ENCODE measurements at regions of chr7 and their contacts with region 1.

Region 1: GRCh38 chr7:137579913-137580640 is 236.5 kb upstream of the PTN start:
- DNase-seq: no peak
- ATAC-seq: peak; percentile 72
- H3K4me3 ChIP-seq: no peak overlapping the region
- H3K27ac ChIP-seq: no peak overlapping the region
- H3K4me1 ChIP-seq: no peaks in the 10 kb centered on the region
- H3K27me3 ChIP-seq: no peaks in the 10 kb centered on the region
- CTCF ChIP-seq: no peak
- EP300 ChIP-seq: no peak
- POLR2A ChIP-seq: no peak
- RAD21 ChIP-seq: no peak

Region 2: DNA sequence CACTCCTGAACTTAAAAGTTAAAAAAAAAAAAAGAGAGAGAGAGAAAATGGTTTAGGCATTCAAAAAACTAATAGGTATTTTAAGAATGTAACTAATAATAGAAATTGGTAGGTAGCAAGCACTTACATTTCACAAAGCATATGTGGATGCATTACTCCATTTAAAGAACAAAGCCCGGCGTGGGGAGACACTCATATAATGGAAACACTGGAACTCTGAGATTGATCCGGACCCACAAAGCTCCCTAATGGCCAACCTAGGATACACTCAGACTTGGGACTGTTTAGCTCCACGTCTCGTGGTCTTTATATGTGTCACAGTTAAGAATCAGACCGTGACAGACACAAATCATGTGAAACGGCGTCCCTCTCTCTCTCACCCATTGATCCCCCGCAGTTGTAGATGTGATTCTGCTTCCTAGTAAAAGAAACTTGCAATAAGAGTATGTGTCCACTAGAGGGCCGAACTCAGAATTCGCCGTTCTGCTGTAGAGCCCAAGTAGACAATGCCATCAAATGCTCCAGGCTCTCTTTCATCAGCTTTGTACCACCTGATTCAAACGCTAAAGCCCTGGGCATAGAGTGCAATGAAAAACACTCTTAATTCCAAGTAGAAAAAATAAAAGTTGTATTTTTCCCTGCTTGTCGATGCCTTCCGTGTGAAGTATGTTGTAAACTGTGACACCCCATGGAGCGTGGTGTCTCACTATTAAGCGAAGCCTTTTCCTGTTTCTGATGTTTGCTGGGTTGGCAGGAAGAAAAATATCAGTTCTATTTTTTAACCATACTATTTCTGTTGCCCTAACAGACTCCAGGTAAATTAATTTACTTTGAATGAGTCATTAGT is 1173.9 kb before region 1 on chr7:
- CTCF ChIA-PET with region 1: no interaction called
- POLR2A ChIA-PET with region 1: no interaction called
- RAD21 ChIA-PET with region 1: no interaction called
- SMC1A ChIA-PET with region 1: no interaction called
- in situ Hi-C with region 1: loop called (anchors 10 kb)
- intact Hi-C with region 1: no loop called
- DNase-seq: no peak
- ATAC-seq: peak; percentile 98
- H3K4me3 ChIP-seq: no peak overlapping the region
- H3K27ac ChIP-seq: no peak overlapping the region
- H3K4me1 ChIP-seq: no peaks in the 10 kb centered on the region
- H3K27me3 ChIP-seq: no peaks in the 10 kb centered on the region
- CTCF ChIP-seq: peak; percentile 56 to 84 (median 81)
- EP300 ChIP-seq: no peak
- POLR2A ChIP-seq: no peak
- RAD21 ChIP-seq: peak; percentile 56

Region 3: DNA sequence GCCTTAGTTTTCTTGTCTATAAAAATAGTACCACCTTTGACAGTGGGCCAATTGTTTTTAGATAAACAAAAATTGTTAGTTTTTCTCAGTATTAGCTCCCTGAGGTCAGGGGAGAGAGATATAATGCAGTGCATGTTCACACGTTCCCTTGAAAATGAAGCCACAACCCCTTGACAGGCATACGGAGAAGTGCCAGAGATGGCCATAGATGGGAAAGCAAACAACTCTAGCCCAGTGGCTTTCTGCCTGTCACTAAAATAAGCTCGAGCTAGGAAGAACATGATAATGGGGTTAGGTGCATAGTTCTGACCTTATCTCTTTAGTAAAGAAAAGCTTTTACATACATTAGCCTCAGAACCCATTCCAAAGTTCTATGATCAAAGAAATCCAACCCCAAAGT is 586.7 kb before region 1 on chr7:
- CTCF ChIA-PET with region 1: no interaction called
- POLR2A ChIA-PET with region 1: no interaction called
- RAD21 ChIA-PET with region 1: no interaction called
- SMC1A ChIA-PET with region 1: no interaction called
- in situ Hi-C with region 1: no loop called
- intact Hi-C with region 1: no loop called
- DNase-seq: no peak
- ATAC-seq: no peak
- H3K4me3 ChIP-seq: no peak overlapping the region
- H3K27ac ChIP-seq: no peak overlapping the region
- H3K4me1 ChIP-seq: no peaks in the 10 kb centered on the region
- H3K27me3 ChIP-seq: no peaks in the 10 kb centered on the region
- CTCF ChIP-seq: no peak
- EP300 ChIP-seq: no peak
- POLR2A ChIP-seq: no peak
- RAD21 ChIP-seq: no peak

Region 4: DNA sequence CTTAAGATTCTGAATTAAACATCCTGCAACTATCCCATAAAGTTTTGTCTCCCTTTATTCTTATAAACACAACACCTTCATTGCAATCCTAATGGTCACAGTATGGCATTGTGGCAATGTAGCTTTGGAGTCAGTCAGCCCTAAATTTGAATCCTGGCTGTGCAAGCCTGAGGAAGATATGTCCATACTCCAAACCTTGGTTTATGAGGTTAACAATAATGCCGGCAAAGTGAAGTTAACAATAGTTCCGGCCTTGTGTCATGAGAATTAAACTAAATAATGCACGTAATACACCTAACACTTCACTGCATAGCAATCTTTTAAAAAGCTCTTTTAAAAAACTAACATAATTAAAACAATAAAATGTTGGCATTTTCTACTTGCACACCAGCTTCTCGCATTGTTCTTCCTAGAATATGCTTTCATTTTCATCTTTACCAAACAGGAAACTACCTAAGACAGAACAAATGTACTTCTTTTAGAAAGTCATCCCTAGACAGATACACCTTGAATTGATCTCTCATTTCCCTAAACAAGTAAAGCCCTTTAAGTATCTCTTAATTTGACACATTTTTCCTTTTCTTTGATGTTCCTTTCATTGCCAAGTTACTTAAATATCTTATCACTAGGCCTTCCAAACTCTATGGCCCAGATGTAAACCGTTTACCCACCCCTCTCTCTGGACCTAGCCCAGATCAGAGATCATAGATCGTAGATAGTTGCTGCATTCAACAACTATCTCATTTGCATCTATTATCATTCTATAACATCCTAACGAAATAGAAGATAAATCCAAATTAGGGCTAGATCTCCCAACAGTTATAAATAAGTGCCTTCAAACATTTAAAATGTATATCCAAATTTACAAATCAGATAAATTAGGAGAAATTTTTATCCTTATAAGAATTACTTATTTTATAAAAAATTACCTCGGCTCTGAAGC is 355.1 kb after region 1 on chr7:
- CTCF ChIA-PET with region 1: no interaction called
- POLR2A ChIA-PET with region 1: no interaction called
- RAD21 ChIA-PET with region 1: no interaction called
- SMC1A ChIA-PET with region 1: no interaction called
- in situ Hi-C with region 1: no loop called
- intact Hi-C with region 1: no loop called
- DNase-seq: peak; percentile 30
- ATAC-seq: peak; percentile 88
- H3K4me3 ChIP-seq: peak overlapping the region; percentile 73
- H3K27ac ChIP-seq: peak overlapping the region; percentile 92
- H3K4me1 ChIP-seq: peaks cover 35% of the 10 kb centered on the region
- H3K27me3 ChIP-seq: no peaks in the 10 kb centered on the region
- CTCF ChIP-seq: no peak
- EP300 ChIP-seq: peak in 1 of 2 experiments; percentile 26; a peak in 1 of 4 replicates
- POLR2A ChIP-seq: no peak
- RAD21 ChIP-seq: no peak